ENCODE measurements at regions of chr17 and their contacts with region 1.

Region 1: DNA sequence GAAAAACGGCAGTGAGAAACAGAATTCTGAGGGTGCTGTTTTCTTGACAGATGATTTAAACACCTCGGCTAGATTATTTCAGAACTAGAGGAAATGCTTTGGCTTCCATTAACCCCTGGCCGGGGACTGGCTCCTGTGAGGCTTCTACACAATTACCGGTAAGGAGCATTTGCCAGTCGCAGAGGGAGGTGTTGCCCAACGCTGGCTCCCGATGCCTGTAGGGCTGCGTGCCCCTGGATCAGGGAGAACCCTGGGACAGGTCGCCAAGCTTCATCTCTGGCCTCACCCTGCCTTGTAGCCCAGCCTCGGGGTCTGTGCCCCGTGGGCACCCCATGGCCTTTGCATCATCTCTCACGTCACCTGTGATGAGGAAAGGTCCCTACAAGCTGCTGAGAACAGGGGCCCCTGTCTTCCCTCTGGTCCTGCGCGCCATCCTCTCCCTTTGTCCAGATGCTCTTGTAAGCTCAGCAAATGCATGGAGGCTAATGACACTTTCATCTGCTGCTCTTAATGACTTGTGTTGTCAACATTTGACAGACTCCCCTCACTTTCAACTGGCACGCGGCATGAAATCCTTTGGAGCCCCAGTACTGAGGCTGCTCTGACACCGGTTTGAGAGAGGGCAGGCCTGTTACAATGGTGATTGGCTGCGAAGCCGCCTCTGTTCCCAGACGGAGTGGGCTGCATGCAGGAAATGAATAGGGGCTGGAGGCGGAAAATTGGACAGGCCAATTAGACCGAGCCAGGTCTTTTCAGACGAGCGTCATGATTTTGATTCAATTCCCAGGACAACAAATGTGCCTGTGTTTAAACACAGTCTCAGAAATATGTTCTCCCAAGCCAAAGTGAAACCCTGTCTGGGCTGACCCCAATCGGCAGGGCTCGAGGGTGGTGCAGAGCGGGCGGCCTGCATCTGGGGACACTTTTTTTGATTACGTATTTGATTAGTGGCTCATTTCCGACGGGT is 85.5 kb upstream of the DOC2B start:
- DNase-seq: no peak
- H3K4me3 ChIP-seq: no peak overlapping the region
- H3K27ac ChIP-seq: no peak overlapping the region
- H3K4me1 ChIP-seq: no peaks in the 10 kb centered on the region
- H3K27me3 ChIP-seq: no peaks in the 10 kb centered on the region
- CTCF ChIP-seq: no peak

Region 2: GRCh38 chr17:199806-200540 is 67.0 kb before region 1 on chr17:
- CTCF ChIA-PET with region 1: no interaction called
- dilution Hi-C with region 1: loop called (anchors 5 kb)
- in situ Hi-C with region 1: no loop called
- intact Hi-C with region 1: no loop called
- DNase-seq: peak; percentile 20
- H3K4me3 ChIP-seq: no peak overlapping the region
- H3K27ac ChIP-seq: no peak overlapping the region
- H3K4me1 ChIP-seq: no peaks in the 10 kb centered on the region
- H3K27me3 ChIP-seq: no peaks in the 10 kb centered on the region
- CTCF ChIP-seq: no peak

Region 3: GRCh38 chr17:222172-222571 is 44.8 kb before region 1 on chr17:
- CTCF ChIA-PET with region 1: no interaction called
- dilution Hi-C with region 1: no loop called
- in situ Hi-C with region 1: no loop called
- intact Hi-C with region 1: no loop called
- DNase-seq: no peak
- H3K4me3 ChIP-seq: no peak overlapping the region
- H3K27ac ChIP-seq: no peak overlapping the region
- H3K4me1 ChIP-seq: no peaks in the 10 kb centered on the region
- H3K27me3 ChIP-seq: no peaks in the 10 kb centered on the region
- CTCF ChIP-seq: no peak

Region 4: DNA sequence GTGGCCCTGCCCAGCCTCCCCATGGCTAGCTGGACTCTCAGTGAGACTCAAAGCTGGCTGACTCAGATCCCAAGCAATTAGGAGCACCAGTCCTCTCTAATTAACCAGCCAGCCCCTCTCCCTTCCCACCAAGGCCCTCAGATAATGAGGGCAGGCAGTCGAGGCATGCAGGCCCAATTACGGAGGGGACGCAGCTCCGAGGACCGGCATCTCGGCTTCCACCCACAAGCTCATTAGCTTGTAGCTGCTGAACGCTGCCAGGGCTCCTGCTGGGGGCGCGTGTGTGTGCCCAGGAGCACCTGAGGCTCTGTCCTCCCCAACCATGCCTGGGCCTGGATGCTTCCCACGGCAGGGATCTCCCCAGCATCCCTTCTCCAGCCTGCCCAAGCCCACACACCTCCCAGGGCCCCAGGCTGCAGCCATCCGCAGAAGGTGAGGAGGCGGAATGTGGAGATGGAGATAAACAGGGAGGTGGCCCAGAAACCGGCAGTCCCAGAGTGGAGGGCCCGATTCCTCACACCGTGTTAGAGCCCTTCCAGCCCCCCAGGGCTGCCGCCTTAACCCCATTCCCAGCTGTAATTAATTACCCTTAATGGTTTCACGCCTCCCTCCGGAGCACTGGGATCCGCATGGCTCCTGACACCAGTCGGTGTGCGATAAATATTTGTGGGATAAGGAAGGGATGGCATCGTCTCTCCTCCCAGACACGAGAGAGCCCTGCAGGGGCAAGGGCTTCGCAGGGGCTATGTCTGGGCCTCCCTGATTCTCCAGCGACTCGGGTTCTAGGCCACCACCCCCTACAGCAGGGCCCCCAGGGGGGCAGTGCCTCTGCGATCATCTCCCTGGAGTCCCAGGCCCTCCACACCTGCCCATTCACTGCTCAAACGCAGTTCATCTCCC is 43.4 kb after region 1 on chr17:
- CTCF ChIA-PET with region 1: no interaction called
- dilution Hi-C with region 1: loop called (anchors 5 kb)
- in situ Hi-C with region 1: no loop called
- intact Hi-C with region 1: no loop called
- DNase-seq: no peak
- H3K4me3 ChIP-seq: no peak overlapping the region
- H3K27ac ChIP-seq: no peak overlapping the region
- H3K4me1 ChIP-seq: no peaks in the 10 kb centered on the region
- H3K27me3 ChIP-seq: no peaks in the 10 kb centered on the region
- CTCF ChIP-seq: no peak

Region 5: GRCh38 chr17:350706-351448 is 83.9 kb after region 1 on chr17:
- CTCF ChIA-PET with region 1: no interaction called
- dilution Hi-C with region 1: loop called (anchors 5 kb)
- in situ Hi-C with region 1: no loop called
- intact Hi-C with region 1: no loop called
- DNase-seq: peak; percentile 47
- H3K4me3 ChIP-seq: no peak overlapping the region
- H3K27ac ChIP-seq: peak overlapping the region; percentile 18
- H3K4me1 ChIP-seq: peaks cover 43% of the 10 kb centered on the region
- H3K27me3 ChIP-seq: no peaks in the 10 kb centered on the region
- CTCF ChIP-seq: no peak